ENCODE measurements at regions of chr15 and their contacts with region 1.

Region 1: DNA sequence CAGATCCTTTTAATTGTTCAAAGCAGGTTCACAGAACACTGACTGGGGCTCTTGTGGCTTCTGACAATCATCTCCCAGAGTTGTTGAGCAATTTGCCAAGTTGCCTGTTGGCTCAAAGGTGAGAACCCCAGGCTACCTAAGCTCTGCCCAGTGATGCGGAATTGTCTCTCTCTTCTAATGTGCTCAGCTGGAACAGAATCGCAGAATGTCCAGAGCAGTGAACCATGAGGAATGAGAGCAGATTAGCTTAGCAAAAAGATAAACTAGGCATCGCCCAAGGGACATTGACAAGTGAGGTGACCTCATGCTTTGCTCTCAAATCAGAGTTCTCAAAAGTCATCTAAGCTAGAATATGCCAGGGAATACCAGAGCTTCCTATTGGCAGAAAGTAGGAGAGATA is 148.1 kb downstream of the WDR76 start:
- DNase-seq: no peak
- H3K4me3 ChIP-seq: no peak overlapping the region
- CTCF ChIP-seq: no peak
- POLR2A ChIP-seq: no peak

Region 2: GRCh38 chr15:43913026-43913927 is 61.6 kb before region 1 on chr15:
- intact Hi-C with region 1: loop called (anchors 5 kb)
- DNase-seq: peak in 1 of 2 donors; percentile 23
- H3K4me3 ChIP-seq: no peak overlapping the region
- CTCF ChIP-seq: no peak
- POLR2A ChIP-seq: no peak